ENCODE measurements at regions of chr22 and their contacts with region 1.

Region 1: GRCh38 chr22:41621099-41621910 is at the start of gene XRCC6:
- DNase-seq: peak; percentile 100
- ATAC-seq: peak; percentile 88
- H3K4me3 Mint-ChIP-seq: peak within 1 kb of the TSS; percentile 96
- H3K27ac Mint-ChIP-seq: peak within 1 kb of the TSS; percentile 97
- H3K4me1 Mint-ChIP-seq: peaks cover 47% of the 10 kb centered on the region
- H3K27me3 Mint-ChIP-seq: no peaks in the 10 kb centered on the region
- total RNA-seq, gene XRCC6: 274 to 359 TPM

Region 2: DNA sequence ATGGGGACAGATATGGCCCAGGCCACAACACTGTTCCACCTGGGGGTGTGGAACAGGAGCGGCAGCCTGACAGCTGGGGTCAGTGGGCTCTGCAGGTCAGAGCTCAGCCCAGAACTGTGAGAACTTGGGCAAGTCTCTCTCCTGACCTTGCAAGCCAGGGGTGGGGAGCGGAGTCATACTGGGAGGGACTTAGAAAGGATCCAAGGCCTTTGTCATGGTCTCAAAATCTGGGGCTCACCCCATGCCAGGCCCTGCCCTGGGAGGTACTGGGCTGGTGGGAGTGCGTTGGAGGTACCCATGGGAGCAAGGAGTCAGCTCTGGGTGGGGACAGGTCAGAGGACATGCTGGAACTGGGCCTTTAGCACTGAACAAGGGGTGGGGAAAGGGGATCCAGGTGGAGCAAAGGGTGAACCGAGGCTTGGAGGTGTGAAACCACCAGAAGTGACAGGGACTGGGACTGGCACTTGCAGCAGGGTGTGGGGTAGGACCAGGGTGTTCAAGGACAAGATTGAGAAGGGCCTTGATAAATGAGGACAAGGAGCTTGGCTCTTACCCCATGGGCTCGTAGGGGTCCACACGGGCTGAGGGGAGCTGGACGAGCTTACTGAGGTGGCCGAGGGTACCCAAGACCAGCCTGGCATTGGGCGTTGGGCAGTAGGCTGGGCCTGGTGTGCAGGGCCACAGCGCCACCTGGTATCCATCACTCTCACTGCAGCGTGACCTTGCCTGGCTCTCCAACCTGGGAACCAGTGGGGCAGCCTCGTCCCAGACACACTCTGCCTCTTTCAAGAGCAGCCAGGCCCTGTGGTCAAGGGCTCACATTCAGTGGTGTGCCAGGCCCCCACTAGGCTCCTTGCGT is 24.3 kb before region 1 on chr22:
- CTCF ChIA-PET with region 1: interaction called, 25 read pairs
- DNase-seq: peak; percentile 51
- ATAC-seq: peak; percentile 68
- H3K4me3 Mint-ChIP-seq: no peak overlapping the region
- H3K27ac Mint-ChIP-seq: no peak overlapping the region
- H3K4me1 Mint-ChIP-seq: peaks cover 19% of the 10 kb centered on the region
- H3K27me3 Mint-ChIP-seq: no peaks in the 10 kb centered on the region

Region 3: DNA sequence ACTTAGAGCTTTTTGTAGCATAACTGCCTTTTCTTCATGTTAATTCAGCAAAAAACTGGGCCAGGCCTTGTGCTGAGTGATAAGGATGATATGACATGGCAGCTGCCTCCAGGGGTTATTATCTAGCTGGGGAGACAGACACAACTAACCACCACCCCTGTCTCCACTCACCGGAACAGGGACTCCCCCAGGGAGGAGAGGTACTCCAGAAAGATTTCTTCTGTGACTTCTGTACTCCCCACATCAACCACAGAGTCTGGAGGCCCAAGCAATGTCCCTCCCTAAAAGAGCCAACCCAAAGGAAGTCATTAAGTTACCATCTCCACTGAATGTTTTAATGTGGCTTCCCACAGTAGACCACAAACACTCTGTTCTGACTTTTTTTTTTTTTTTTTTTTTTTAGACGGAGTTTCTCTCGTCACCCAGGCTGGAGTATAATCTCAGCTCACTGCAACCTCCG is 17.4 kb before region 1 on chr22:
- CTCF ChIA-PET with region 1: interaction called, 25 read pairs
- DNase-seq: peak; percentile 90
- ATAC-seq: peak; percentile 95
- H3K4me3 Mint-ChIP-seq: peak overlapping the region; percentile 5
- H3K27ac Mint-ChIP-seq: peak overlapping the region; percentile 79
- H3K4me1 Mint-ChIP-seq: peaks cover 47% of the 10 kb centered on the region
- H3K27me3 Mint-ChIP-seq: no peaks in the 10 kb centered on the region

Measured in activated CD8-positive, alpha-beta memory T cell treated with anti-CD3 and anti-CD28 coated beads, Interleukin-2, amount 10 ng/mL, durations not matched to agents 7 days and 5 days (primary cell).